Esophagus muscularis mucosa (tissue), 4 donors: ENCODE measurements at regions of chr4 and their contacts with region 1.

Region 1: DNA sequence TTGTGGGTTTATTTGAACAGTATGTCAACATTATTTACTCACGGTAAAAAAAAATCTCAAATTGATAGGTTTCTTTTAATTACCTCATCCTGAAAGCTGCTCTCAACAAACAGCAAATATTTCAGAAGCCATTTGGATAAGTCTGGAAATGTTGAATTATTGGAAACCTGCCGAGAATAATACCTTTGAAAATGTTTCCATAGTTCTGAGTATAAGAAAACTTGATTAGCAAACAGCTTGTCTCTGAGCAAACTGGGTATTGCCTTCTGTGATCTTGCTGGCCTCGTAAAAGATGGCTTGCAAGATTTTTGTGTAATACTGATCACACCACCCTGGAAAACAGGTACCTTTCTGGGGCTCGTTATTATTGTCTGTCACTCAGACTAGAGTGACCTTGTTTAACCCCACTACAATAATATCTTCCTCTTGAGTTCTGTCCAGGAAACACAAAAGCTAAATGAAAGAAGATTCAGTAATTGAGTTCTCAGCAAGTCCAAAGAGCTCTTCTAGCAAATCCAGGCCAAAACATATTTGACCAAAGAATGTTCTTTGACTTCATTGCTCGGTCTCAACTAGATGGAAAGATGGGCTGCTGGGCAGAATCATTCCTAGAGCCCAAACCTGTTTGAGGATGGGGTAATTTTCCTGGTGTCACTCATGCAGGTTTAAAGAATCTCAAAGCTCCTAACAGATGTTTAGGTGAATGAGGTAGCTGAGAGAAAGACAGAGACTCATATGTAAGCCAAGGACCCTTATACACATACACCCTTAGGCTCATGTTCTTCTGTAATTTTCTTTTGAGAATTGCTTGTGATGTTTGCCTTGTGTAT is 255.6 kb upstream of the JADE1 start:
- DNase-seq: no peak
- H3K4me3 ChIP-seq: peak overlapping the region; percentile 57 to 67 (median 66)
- H3K27ac ChIP-seq: peak overlapping the region; percentile 89 to 92 (median 91)
- H3K4me1 ChIP-seq: peaks cover 19 to 21% (median 20%) of the 10 kb centered on the region in 4 donors
- H3K27me3 ChIP-seq: peaks cover 0 to 4% (median 0%) of the 10 kb centered on the region in 4 donors
- CTCF ChIP-seq: no peak
- EP300 ChIP-seq: no peak
- POLR2A ChIP-seq: no peak

Region 2: GRCh38 chr4:128287871-128288688 is 265.8 kb before region 1 on chr4:
- intact Hi-C with region 1: loop called (anchors 5 kb)
- DNase-seq: peak; percentile 100
- H3K4me3 ChIP-seq: peak overlapping the region; percentile 81 to 96 (median 87)
- H3K27ac ChIP-seq: peak overlapping the region; percentile 94 to 97 (median 95)
- H3K4me1 ChIP-seq: peaks cover 26 to 38% (median 33%) of the 10 kb centered on the region in 4 donors
- H3K27me3 ChIP-seq: no peaks in the 10 kb centered on the region
- CTCF ChIP-seq: peak in 2 of 3 experiments; percentile 35 to 41
- EP300 ChIP-seq: peak; percentile 70
- POLR2A ChIP-seq: peak; percentile 63

Region 3: GRCh38 chr4:128393101-128393704 is 160.7 kb before region 1 on chr4:
- intact Hi-C with region 1: loop called (anchors 5 kb)
- DNase-seq: no peak
- H3K4me3 ChIP-seq: no peak overlapping the region
- H3K27ac ChIP-seq: peak overlapping the region; percentile 73 to 77 (median 75)
- H3K4me1 ChIP-seq: peaks cover 6 to 55% (median 53%) of the 10 kb centered on the region in 4 donors
- H3K27me3 ChIP-seq: no peaks in the 10 kb centered on the region
- CTCF ChIP-seq: no peak
- EP300 ChIP-seq: no peak
- POLR2A ChIP-seq: no peak

Region 4: DNA sequence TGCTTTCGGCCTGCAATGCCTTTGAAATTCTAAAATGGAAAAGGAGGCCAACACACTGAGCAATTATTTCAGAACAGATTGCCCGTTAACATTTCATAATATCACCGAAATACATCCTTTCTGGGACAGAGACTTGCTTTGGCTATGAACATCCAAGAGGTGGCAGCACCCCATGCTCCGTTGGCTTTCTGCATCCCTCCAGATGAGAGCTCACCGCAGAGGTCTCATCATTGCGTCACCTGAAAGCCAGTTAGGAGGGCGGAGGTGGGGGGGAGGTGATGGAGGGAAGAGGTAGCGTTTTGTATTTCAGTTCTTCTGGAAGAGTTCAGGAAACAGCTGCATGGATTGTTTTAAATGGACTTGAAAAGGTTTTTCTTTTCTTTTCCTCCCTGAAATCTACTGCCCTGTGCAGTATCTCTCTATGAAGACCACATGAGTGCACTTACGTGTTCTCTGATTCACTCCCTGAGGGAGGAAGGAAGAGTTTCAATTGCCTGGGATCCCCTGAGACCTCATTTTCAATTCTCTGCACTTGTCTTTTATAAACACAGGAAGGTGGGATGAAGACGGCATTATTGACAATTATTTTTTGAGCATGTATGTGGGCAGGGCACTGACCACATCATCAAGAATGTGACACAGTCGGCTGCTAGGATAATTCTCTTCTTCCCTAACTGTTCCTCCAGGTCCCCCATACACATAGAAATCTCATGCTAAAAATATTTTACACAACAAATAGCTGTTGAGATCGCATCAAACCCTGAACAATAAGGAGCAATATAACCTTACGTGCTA is 99.4 kb before region 1 on chr4:
- intact Hi-C with region 1: loop called (anchors 5 kb)
- DNase-seq: peak; percentile 94
- H3K4me3 ChIP-seq: no peak overlapping the region
- H3K27ac ChIP-seq: peak overlapping the region in 2 of 4 donors; percentile 13 to 28
- H3K4me1 ChIP-seq: peaks cover 11 to 25% (median 18%) of the 10 kb centered on the region in 4 donors
- H3K27me3 ChIP-seq: no peaks in the 10 kb centered on the region
- CTCF ChIP-seq: peak; percentile 77 to 83 (median 82)
- EP300 ChIP-seq: no peak
- POLR2A ChIP-seq: no peak

Region 5: DNA sequence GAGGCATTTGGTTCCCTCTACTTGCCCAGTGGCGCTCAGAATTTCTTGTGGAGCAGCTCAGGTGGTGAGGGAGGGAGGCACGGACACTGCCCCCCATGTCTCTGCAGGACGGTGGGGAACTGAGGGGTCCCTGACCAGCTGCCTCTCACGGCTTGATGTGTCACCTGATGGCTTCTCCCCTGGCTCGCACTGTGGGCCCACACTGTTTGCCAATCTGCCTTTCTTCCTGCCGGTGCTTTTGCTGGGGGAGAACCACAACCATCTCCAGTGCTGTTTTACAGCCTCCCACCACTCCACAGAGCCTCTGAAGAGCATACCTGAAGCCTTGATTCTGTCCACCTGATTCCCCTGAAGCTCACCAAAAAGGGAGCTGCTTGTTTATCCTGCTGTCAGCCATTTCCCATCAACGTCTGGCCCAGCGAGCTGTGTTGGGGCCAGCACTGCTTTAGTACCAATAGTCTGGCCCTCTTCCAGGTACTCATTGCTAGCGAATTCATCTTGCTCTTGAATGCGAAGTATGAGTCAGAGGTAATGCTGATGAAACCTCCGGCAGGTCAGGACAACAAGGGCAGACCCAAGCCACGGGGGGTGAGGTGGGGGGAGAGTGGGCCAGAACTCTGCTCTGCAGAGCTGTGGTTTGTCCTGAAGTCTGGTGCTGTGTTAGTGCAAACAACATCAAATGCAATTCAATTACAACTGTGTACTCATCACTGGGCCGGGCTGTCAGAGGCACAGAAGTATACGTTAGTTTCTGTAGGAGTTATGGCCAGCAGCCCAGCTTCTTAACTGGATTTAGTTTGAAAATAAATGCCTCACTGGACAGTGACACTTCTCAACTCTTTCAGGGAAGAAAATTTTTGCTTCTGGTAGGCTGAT is 47.3 kb after region 1 on chr4:
- intact Hi-C with region 1: no loop called
- DNase-seq: no peak
- H3K4me3 ChIP-seq: no peak overlapping the region
- H3K27ac ChIP-seq: peak overlapping the region; percentile 29 to 68 (median 50)
- H3K4me1 ChIP-seq: peaks cover 22 to 33% (median 29%) of the 10 kb centered on the region in 4 donors
- H3K27me3 ChIP-seq: no peaks in the 10 kb centered on the region
- CTCF ChIP-seq: no peak
- EP300 ChIP-seq: no peak
- POLR2A ChIP-seq: no peak

Region 6: GRCh38 chr4:129037093-129037492 is 483.2 kb after region 1 on chr4:
- intact Hi-C with region 1: no loop called
- DNase-seq: no peak
- H3K4me3 ChIP-seq: no peak overlapping the region
- H3K27ac ChIP-seq: no peak overlapping the region
- H3K4me1 ChIP-seq: no peaks in the 10 kb centered on the region
- H3K27me3 ChIP-seq: no peaks in the 10 kb centered on the region
- CTCF ChIP-seq: no peak
- EP300 ChIP-seq: no peak
- POLR2A ChIP-seq: no peak

Region 7: DNA sequence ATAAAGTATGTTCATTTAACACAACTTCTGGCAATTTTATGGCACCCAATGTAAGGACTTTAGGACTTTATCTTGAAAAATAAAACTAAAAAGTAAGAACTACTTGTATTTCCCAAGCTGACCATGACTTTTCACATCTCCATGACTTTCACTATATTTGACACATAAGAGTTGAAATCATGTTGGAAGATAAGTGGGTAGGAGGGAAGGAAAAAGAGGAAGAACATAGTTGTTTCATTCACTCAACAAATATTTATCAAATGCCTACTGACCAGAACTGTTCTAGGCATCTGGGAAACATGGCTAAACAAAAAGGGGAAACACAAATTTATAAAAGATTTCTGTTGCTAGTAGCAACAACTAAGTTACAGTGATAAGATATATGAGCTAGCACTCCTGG is 523.4 kb after region 1 on chr4:
- intact Hi-C with region 1: no loop called
- DNase-seq: no peak
- H3K4me3 ChIP-seq: no peak overlapping the region
- H3K27ac ChIP-seq: no peak overlapping the region
- H3K4me1 ChIP-seq: no peaks in the 10 kb centered on the region
- H3K27me3 ChIP-seq: no peaks in the 10 kb centered on the region
- CTCF ChIP-seq: no peak
- EP300 ChIP-seq: no peak
- POLR2A ChIP-seq: no peak